ENCODE measurements at regions of chr17 and their contacts with region 1.

Region 1: DNA sequence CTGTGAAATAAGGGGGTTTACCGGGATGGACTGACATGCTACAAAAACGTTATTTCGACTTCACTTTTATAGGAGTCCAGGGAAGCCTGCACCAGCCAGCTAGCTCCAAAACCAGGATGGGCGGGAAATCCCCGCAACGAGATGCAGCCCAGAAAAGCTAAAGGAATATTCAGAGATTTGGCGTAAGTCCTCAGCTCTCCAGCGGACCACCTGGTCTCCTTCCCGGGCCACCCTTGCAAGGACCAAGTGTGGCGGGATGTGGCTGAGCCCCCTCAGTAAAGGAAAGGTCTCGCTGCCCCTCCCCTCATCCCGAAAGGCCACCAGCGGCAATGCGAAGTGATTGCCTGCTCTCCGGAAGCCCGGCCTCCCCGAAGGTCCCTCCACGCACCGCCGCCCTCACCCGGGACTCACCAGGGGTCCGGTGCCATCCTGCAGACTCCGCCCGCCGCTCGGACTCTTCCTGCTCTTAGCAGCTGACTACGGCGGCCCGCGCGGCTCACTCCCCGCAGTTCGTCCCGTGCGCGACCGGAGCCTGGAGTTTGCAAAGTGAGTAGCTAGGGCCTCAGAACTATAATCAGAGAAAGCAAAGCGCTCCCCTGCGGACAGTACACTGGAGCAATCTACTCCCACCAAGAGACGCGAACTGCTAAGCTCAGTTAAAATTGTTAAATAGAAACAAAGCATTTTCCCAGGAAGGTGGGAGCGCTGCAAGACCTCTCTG is at the start of gene STX8:
- DNase-seq: peak; percentile 88
- CTCF ChIP-seq: no peak

Region 2: DNA sequence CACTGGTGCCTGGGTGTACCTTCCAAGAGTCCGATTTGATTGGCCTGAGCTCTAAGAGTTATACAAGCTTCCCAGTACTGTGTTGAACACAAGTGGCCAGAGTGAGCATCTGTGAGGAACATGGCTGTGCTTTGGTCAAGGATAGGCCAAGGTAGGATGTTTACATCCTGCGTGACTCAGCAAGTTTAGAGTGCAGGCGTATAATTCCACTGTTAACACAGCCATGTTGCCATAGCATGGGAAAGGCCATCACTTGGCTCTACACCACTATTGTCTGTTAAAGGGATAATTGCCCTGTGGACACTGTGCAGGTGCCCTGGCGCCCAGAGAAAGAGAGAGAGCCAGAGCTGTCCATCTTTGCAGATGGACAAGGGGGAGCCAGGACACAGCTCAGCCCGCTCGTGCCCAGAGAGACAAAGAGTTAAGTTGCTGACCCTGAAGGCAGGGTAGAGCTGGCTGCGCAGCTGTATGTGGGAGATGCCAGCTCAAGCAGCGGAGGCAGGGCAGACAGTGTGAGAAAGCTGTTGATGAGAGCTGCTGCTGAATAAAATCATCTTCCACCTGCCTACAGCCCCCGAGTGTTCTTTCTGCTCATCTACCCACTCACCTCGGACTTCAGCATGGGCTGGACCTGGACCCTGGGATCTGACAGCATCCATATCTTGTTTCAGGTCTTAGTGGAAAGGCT is 12.6 kb after region 1 on chr17:
- CTCF ChIA-PET with region 1: interaction called, 25 read pairs
- POLR2A ChIA-PET with region 1: no interaction called
- DNase-seq: no peak
- CTCF ChIP-seq: no peak

Region 3: DNA sequence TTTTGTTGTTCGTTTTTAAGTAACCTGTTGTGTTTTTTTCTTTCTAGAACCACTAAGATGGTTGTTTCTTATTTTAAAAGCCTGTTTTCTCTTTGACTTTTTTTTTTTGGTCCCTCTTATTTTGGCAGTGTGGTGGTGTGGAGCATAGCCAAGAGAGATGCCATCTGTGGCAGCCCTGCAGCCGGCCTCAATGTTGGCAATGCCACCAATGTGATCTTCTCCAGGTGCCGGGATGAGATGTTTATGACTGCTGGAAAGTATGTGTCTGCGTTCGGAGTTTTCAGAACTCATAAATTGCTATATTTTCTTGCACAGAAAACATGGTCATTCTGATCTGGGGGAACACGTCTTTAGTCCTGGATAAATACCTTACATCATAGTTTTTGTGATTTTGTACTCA is 18.5 kb after region 1 on chr17:
- CTCF ChIA-PET with region 1: interaction called, 25 read pairs
- POLR2A ChIA-PET with region 1: no interaction called
- DNase-seq: no peak
- CTCF ChIP-seq: no peak

Region 4: GRCh38 chr17:9768381-9768934 is 192.9 kb after region 1 on chr17:
- CTCF ChIA-PET with region 1: interaction called, 13 read pairs
- POLR2A ChIA-PET with region 1: no interaction called
- DNase-seq: peak; percentile 52
- CTCF ChIP-seq: peak; percentile 27